Uterus (tissue), 4 donors: ENCODE measurements at regions of chr11 and their contacts with region 1.

Region 1: DNA sequence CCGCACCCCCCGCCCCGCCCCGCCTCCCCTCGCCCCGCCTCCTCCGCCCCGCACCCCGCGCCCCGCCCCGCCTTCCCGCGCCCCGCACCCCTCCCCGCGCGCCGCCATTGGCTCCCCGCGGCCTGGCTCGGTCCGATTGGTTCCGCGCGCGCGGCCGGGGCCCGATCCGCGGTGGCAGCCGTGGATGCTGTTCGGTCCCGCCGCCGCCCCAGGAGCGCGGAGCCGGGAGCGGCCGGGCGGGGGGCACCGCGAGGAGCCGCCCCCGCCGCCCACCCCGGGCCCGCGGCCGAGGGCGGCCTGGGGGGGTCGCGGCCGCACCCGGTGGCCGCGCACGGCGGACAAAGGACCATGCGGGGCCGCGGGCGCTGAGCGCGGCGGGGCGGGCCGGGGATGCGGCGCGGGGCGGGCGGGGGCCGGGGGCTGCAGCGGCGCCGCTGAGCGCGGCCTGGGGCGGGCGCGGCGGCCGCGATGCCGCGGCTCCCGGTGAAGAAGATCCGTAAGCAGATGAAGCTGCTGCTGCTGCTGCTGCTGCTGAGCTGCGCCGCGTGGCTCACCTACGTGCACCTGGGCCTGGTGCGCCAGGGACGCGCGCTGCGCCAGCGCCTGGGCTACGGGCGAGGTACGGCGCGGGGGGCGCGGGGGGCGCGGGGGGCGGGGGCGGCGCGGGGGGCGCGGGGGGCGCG is at the start of gene B4GALNT4:
- DNase-seq: no peak
- H3K4me3 ChIP-seq: peak within 1 kb of the TSS; percentile 11 to 40
- H3K27ac ChIP-seq: peak within 1 kb of the TSS in 1 of 2 donors; percentile 66
- H3K4me1 ChIP-seq: no peaks in the 10 kb centered on the region
- H3K27me3 ChIP-seq: peaks cover 0 to 4% of the 10 kb centered on the region in 2 donors
- CTCF ChIP-seq: no peak
- POLR2A ChIP-seq: no peak
- total RNA-seq, gene B4GALNT4: 1.8 to 39.7 (median 19.9) TPM

Region 2: DNA sequence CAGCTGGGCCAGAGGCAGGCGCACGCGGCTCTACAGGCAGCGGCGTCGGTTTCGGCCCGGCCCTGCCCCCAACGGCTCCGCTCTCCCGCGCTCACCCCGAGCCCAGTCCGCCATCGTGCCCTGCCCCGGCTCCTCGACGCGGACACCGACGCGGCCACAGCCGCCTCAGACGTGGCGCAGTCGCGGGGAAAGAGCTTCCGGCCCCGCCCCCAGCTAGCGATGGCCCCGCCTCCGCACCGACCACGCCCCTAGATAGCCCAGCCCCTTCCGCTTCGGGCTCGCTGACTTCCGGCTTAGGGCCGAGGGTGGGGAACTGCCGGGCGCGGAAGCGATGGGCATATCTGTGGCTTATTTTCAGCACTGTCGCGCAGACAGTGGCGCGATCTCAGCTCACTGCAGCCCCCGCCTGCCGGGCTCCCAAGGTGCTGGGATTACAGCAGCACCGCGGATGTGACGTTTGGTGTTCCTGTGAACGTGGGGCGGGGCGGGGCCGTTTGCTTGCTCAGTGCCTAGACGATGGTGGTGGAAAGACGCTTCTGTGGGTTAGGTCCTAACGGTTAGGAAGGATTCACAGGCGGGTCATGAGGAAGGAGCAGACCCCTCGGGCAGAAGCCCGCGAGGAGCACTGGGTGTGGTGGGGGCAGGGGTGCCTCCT is 162.1 kb before region 1 on chr11 and contains the starts of genes BET1L and RIC8A:
- intact Hi-C with region 1: loop called (anchors 10 kb)
- DNase-seq: peak; percentile 96 to 98
- H3K4me3 ChIP-seq: peak within 1 kb of the TSS; percentile 91 to 92
- H3K27ac ChIP-seq: peak within 1 kb of the TSS; percentile 89 to 94
- H3K4me1 ChIP-seq: peaks cover 13 to 28% of the 10 kb centered on the region in 2 donors
- H3K27me3 ChIP-seq: no peaks in the 10 kb centered on the region
- CTCF ChIP-seq: peak in 1 of 4 experiments; percentile 28
- POLR2A ChIP-seq: peak; percentile 90 to 93
- total RNA-seq, gene BET1L: 8.7 to 57.8 (median 15.0) TPM
- total RNA-seq, gene RIC8A: 84.5 to 376 (median 192) TPM

Region 3: GRCh38 chr11:250274-250673 is 119.2 kb before region 1 on chr11:
- intact Hi-C with region 1: no loop called
- DNase-seq: no peak
- H3K4me3 ChIP-seq: no peak overlapping the region
- H3K27ac ChIP-seq: no peak overlapping the region
- H3K4me1 ChIP-seq: no peaks in the 10 kb centered on the region
- H3K27me3 ChIP-seq: no peaks in the 10 kb centered on the region
- CTCF ChIP-seq: no peak
- POLR2A ChIP-seq: no peak

Region 4: GRCh38 chr11:289712-290620 is 79.5 kb before region 1 on chr11:
- intact Hi-C with region 1: loop called (anchors 5 kb)
- DNase-seq: peak; percentile 16
- H3K4me3 ChIP-seq: peak overlapping the region in 1 of 2 donors; percentile 29
- H3K27ac ChIP-seq: peak overlapping the region in 1 of 2 donors; percentile 61
- H3K4me1 ChIP-seq: peaks cover 0 to 6% of the 10 kb centered on the region in 2 donors
- H3K27me3 ChIP-seq: no peaks in the 10 kb centered on the region
- CTCF ChIP-seq: no peak
- POLR2A ChIP-seq: no peak

Region 5: DNA sequence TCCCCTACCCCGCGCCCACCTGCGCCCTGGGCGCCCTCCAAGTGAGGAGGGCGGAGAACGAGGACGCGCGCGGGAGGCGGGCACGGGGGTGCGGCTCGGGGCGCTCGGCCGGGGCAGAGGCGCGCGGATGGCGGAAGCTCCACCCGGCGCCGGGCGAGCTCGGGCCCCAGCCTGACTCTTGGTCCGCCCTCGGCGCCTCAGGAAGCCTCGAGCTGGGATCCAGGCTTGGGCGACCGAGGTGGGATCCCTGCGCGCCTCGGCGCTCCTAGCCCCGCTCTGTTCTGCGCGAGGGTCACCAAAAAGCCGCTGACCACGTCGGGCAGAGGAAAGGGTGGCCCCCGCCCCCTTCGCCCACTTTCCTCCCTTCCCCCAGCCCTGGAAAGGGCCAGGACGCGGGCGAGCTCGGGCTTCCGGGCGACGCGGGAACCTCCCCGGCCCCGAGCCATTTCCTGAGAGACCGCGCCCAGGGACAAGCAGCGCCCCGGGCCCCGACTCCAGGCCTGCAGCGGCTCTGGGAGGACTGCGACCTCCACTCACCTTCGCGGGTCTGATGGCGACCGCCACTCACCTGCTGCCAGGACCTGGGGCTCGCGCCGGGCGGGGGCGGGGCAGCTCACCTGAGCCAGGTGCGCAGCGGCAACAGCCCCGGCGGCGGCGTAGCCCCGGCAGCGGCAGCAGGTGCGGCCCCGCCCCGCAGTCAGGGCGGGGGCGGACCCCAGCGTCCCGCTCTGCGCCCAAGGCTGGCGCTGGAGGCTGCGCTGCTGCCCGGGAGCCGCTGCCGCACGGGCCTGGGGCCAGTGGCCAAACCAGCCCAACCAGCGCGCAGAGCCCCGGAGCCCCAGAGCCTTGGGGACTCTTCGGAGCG is 47.5 kb after region 1 on chr11:
- intact Hi-C with region 1: no loop called
- DNase-seq: no peak
- H3K4me3 ChIP-seq: peak overlapping the region; percentile 22 to 30
- H3K27ac ChIP-seq: peak overlapping the region; percentile 65 to 66
- H3K4me1 ChIP-seq: peaks cover 0 to 10% of the 10 kb centered on the region in 2 donors
- H3K27me3 ChIP-seq: peaks cover 3 to 4% of the 10 kb centered on the region in 2 donors
- CTCF ChIP-seq: no peak
- POLR2A ChIP-seq: no peak